Naive thymus-derived CD8-positive, alpha-beta T cell (primary cell): ENCODE measurements at regions of chr3 and their contacts with region 1.

Region 1: DNA sequence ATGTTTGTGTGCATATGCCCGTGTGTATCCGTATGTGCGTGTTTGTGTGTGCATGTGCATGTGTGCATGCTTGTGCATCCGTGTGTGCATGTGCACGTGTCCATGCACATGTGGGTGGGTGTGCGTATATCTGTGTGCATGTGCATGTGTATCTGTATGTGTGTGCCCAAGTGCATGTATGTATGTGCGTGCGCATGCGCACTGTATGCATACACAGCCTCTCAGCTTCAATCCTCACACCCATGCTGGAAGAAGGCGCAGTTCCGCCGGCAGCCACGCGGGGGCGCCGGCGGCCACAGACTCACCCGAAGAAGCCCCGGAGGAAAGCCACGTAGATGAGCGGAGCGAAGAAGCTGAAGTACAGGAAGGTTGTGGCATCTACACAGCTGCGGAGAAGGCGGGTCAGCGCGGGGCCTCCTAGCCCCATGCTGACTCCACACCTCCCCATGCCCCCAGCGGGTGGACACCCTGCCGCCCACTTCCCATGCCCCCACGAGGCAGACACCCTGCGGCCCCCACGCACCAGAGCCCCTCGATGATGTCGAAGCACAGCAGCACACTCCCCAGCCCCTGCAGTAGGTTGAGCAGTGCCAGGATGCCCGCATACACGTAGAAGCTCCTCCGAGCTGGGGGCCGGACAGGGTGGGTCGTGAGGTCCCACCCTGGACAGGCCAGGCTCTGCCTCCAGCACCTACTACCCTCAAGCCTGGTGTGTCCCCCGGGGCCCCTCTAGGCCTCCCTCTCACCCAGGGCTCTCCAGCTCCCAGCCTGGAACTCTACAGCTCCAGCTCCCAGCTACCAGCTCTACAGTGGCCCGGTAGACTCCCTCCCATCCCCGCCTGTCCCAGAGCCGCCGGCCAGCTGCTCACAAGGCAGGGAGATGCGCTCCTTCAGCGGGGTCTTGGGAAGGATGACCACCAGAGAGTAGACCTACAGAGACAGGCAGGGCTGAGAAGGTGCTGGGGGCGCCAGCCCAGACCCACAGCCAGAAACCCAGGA is 15.4 kb downstream of the TPRA1 start:
- DNase-seq: peak; percentile 71 to 90 (median 78)
- ATAC-seq: peak; percentile 94 to 96
- H3K4me3 Mint-ChIP-seq: peak overlapping the region in 8 of 10 donors; percentile 6 to 64 (median 40)
- H3K27ac Mint-ChIP-seq: peak overlapping the region in 8 of 10 donors; percentile 37 to 90 (median 80)
- H3K4me1 Mint-ChIP-seq: peaks cover 14 to 29% (median 19%) of the 10 kb centered on the region in 4 donors
- H3K27me3 Mint-ChIP-seq: no peaks in the 10 kb centered on the region

Region 2: GRCh38 chr3:127374086-127375010 is 200.8 kb before region 1 on chr3:
- POLR2A ChIA-PET with region 1: no interaction called
- DNase-seq: no peak
- ATAC-seq: no peak
- H3K4me3 Mint-ChIP-seq: no peak overlapping the region
- H3K27ac Mint-ChIP-seq: no peak overlapping the region
- H3K4me1 Mint-ChIP-seq: peaks cover 0 to 3% (median 0%) of the 10 kb centered on the region in 4 donors
- H3K27me3 Mint-ChIP-seq: peaks cover 2 to 32% (median 6%) of the 10 kb centered on the region in 5 donors

Region 3: GRCh38 chr3:127547761-127548605 is 27.2 kb before region 1 on chr3:
- POLR2A ChIA-PET with region 1: no interaction called
- DNase-seq: peak; percentile 52 to 85 (median 74)
- ATAC-seq: peak; percentile 94 to 95
- H3K4me3 Mint-ChIP-seq: peak overlapping the region; percentile 65 to 89 (median 84)
- H3K27ac Mint-ChIP-seq: peak overlapping the region in 2 of 10 donors; percentile 50 to 63
- H3K4me1 Mint-ChIP-seq: peaks cover 9 to 16% (median 13%) of the 10 kb centered on the region in 4 donors
- H3K27me3 Mint-ChIP-seq: peaks cover 0 to 20% (median 5%) of the 10 kb centered on the region in 5 donors

Region 4: DNA sequence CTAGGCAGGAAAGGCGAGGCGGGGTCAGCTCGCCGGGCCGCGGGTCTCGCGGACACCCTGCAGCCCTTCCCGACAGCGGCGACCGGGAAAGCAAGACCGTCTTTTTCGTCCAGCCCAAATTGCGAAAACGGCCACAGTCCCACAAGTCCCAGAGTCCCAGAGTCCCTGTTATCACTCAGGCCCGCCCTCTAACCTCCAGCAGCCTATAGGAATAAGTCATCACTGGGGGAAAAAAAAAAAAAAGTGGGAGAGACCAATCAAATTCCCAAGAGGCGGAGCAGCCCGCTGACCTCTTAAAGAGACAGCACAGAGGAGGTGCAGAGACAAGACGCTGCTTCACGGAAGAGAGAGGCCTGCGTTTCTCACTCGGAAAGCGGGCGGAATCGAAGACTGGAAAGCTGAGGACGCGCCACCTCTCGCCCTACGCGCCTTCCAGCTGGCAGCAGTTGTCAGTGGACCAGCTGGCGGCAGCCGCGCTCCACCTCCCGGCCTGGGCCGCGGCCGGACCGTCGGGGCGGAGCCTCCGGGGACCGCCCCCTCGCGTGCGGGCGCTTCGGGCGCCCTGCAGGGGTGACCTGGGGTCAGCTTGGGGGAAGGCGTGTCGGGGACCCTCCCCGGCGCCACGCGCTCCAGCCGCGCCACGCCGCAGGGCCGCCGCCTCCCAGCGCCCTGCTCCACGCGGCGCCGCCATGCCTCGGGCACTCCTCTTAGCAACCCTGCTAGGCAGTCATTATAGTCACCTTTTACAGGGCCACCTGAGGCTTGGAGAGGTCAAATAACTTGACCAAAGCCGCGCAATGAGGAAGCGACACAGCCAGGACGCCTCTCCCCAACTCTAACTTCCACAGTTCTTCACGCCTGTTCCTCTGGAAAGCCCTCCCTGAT is 15.7 kb after region 1 on chr3 and contains the start of gene TPRA1:
- POLR2A ChIA-PET with region 1: interaction called, 16 read pairs
- DNase-seq: peak; percentile 55 to 92 (median 78)
- ATAC-seq: peak; percentile 87 to 88
- H3K4me3 Mint-ChIP-seq: peak within 1 kb of the TSS; percentile 94 to 100 (median 97)
- H3K27ac Mint-ChIP-seq: peak within 1 kb of the TSS; percentile 94 to 99 (median 98)
- H3K4me1 Mint-ChIP-seq: peaks cover 21 to 47% (median 37%) of the 10 kb centered on the region in 4 donors
- H3K27me3 Mint-ChIP-seq: no peaks in the 10 kb centered on the region
- polyA plus RNA-seq, gene TPRA1: 14.8 to 27.6 (median 15.3) TPM

Region 5: GRCh38 chr3:127652231-127652995 is 77.2 kb after region 1 on chr3:
- POLR2A ChIA-PET with region 1: no interaction called
- DNase-seq: peak in 5 of 10 donors; percentile 20 to 46 (median 35)
- ATAC-seq: peak; percentile 63 to 73
- H3K4me3 Mint-ChIP-seq: no peak overlapping the region
- H3K27ac Mint-ChIP-seq: peak overlapping the region in 2 of 10 donors; percentile 14 to 36
- H3K4me1 Mint-ChIP-seq: no peaks in the 10 kb centered on the region
- H3K27me3 Mint-ChIP-seq: peaks cover 0 to 2% (median 0%) of the 10 kb centered on the region in 5 donors